ENCODE measurements at regions of chr5 and their contacts with region 1.

Region 1: DNA sequence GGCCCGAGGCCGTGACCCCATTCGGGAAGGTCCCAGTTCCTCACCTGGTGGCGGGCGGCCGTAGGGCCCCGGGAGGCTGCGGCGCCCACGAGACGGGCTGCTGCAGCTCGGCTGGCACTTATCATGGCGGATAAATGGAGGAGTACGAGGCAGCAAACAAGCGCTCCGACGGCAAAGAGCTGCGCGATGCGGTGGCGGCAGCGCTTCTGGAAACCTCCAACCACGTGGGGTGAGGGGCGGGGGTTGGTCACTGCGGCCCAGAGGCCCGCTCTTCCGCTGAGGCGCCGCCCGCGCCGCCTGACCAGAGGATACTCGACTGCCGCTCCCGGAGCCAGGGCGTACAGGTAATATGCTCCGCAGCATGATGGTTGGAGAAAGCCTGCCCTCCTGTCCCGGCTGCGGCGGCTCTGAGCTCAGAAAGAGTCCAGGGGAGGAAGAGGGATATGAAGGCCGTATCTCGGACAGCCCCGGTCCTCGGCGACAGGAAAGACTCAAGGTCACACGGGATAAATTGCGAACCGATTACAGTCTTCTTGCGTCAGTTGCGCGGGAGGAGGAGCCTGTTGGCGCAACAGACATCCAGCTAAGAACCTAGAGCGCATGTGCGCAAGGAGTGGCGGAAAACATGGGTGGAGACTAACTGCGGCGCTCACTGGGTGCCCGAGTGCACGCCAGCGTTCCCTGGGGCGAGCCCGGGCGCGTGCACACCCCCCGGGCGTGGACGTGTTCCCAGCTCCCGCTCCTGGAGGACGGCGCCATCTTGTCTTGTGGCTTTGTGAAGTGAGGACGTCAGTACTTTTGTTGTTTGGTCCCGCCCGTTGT is at the start of gene HSPA9:
- DNase-seq: peak; percentile 97
- H3K4me3 Mint-ChIP-seq: peak within 1 kb of the TSS; percentile 90
- H3K27ac Mint-ChIP-seq: peak within 1 kb of the TSS; percentile 99
- H3K4me1 Mint-ChIP-seq: peaks cover 14% of the 10 kb centered on the region
- H3K27me3 Mint-ChIP-seq: no peaks in the 10 kb centered on the region
- total RNA-seq, gene HSPA9: 333 and 340 TPM in 2 replicates

Region 2: DNA sequence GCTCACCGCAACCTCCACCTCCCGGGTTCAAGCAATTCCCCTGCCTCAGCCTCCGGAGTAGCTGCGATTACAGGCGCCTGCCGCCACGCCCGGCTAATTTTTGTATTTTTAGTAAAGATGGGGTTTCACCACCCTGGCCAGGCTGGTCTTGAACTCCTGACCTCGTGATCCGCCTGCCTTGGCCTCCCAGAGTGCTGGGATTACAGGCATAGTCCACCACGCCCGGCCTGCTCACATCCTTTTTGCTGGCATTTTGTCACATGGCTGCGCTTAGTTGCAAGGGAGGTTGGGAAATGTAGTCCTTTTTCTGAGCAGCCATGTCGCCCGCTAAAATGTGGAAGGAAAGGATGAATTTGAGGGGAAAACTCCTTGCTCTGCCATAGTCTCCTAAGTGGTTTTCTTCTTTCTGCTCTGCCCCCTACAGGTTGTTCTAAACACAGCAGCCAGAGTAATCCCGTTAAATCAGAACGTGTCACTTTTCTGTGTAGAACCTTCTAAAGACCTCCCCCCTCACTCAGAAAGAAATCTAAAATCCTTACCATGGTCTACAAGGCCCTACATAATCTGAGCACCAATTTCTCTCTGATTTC is 57.6 kb after region 1 on chr5:
- intact Hi-C with region 1: loop called (anchors 1 kb)
- DNase-seq: no peak
- H3K4me3 Mint-ChIP-seq: no peak overlapping the region
- H3K27ac Mint-ChIP-seq: no peak overlapping the region
- H3K4me1 Mint-ChIP-seq: no peaks in the 10 kb centered on the region
- H3K27me3 Mint-ChIP-seq: peaks cover 34% of the 10 kb centered on the region

Region 3: DNA sequence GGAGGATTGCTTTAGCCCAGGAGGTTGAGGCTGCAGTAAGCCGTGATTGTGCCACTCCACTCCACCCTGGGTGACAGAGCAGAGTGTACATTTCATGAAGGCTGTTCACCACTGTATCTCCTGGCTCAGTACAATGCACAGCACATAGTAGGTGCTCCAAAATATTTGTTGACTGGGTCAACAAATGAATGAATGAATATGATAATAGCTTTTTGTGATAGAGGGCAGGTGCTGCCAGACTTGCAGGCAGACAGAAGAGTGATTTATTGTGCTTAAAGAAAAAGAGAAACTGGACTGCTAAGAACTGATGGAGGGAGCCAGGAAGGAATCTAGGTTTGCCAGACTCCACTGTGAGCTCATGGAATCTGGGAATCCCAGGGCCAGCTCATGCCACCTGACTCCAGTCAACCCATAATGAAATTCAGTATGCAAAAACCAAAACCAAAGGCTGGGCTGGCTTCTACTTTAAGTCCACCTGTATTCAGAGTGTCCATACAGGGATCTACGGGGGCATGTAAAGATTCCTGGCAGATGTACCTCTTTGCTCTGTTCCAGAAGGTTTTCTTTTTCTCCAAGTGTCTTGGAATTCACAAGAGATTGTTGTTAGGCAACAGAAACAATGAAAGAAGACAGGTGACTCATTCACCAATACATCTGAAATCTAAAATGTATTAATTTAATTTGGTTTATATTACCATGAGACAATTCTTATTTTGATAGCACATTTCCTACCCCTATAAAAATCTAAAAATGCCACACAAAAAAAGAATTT is 162.3 kb after region 1 on chr5:
- intact Hi-C with region 1: loop called (anchors 5 kb)
- DNase-seq: no peak
- H3K4me3 Mint-ChIP-seq: no peak overlapping the region
- H3K27ac Mint-ChIP-seq: peak overlapping the region; percentile 92
- H3K4me1 Mint-ChIP-seq: peaks cover 38% of the 10 kb centered on the region
- H3K27me3 Mint-ChIP-seq: peaks cover 10% of the 10 kb centered on the region

Region 4: DNA sequence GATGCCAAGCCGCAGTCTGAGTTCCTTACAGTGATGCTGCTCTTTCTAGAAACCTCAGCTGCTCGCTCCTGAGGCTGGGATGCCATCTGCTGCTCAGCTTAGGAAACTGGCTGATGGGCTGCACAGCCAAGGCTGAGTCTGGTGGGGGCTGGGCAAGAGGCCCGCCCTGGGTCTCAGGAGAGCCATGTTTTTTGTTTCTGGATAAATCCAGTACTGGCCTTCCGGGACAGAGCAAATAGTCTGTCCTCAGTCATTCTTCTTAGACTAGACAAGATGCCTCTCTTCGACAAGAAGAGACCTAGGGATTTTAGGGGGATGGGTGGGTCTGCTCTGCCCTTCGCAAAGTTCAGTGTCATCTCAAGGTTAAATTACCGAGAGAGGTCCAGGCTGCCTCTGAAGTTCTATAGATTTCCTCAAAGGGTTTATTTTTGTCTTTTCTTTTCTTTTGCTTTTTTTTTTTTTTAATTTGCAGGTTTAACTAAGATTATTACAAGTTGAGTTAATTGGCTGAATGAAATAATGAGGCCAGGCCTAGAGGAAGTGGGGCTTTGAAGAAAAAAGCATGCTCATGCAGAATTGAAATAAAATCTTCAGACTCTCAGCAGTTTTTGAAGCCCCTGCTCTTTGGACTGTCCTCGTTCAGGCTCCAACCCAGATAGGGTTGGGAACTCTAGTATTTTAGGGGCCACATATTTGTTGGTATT is 687.5 kb after region 1 on chr5:
- intact Hi-C with region 1: loop called (anchors 1 kb)
- DNase-seq: peak; percentile 57
- H3K4me3 Mint-ChIP-seq: no peak overlapping the region
- H3K27ac Mint-ChIP-seq: no peak overlapping the region
- H3K4me1 Mint-ChIP-seq: peaks cover 11% of the 10 kb centered on the region
- H3K27me3 Mint-ChIP-seq: peaks cover 25% of the 10 kb centered on the region

Region 5: DNA sequence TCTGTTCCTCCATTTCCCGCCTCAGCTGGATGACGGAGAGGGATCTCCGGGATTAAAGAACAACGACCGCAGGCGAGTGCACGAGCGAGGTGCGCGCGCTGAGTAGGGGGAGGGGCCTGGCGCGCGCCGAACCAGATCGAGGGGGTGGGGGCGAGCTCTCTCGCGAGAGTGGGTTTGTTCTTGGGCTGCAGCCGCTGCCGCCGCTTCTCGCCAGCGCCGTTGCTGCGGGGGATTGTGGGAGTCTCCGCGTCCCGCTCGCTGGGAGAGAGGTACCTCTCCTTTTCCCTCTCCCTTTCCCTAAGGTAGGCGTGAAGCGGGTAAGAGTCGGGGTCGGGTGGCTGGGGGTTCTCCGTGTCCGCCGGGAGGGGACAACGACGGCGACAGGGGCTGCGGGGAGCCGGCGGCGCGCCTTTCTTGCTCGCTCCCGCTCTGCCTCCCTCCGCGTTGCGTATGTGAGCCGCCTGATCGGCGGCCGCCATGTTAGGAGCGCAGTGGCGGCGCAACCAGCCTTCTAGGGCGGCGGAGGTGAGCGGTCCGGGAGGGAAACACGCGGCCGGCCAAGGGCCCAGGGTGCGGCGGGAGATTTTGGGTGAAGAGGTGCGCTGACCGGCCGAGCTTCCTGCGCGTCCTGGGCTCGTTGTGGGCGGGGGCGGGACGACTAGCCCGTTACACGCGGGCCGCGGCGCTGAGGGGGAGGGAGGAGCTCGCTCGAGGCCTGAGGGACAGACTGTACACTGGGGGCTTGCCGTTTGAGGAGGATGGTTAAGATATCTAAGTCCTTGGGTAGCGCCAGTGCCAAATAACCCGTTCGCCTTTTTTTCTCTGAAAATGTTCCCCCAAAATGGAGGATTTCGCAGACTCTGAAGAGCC is 718.3 kb after region 1 on chr5 and contains the start of gene MATR3:
- intact Hi-C with region 1: loop called (anchors 1 kb)
- DNase-seq: peak; percentile 90
- H3K4me3 Mint-ChIP-seq: peak within 1 kb of the TSS; percentile 91
- H3K27ac Mint-ChIP-seq: peak within 1 kb of the TSS; percentile 97
- H3K4me1 Mint-ChIP-seq: peaks cover 33% of the 10 kb centered on the region
- H3K27me3 Mint-ChIP-seq: no peaks in the 10 kb centered on the region
- total RNA-seq, gene MATR3: 259 TPM in 2 replicates